ENCODE measurements at regions of chr1 and their contacts with region 1.

Region 1: DNA sequence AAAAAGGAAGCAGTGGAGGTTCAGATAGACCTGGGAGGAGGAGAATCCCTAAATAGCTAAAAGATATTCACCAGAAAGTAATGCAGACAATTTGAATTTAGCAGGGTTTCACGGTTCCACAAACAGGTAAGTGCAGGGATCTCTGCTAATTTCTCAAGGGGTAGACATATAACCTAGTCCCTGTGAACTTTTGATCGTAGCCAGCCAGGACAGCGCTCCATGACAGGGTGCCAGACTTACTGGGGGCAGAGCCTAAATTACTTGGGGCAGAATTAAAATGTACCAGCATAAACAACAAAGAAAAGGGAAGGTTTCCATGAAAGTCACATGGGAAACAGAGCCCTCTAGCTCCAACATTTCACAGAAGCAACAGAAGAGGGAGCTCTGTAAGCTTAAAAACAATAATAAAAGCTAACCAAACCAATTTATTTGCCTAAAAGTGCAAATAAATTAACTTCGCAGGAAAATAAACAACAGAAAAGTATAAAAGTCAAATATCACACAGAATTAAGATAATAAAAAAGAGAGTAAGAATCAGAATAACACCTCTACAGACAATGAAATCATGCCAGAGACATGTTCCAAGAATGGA is 198.3 kb downstream of the DUSP10 start:
- DNase-seq: no peak
- H3K4me3 ChIP-seq: no peak overlapping the region
- CTCF ChIP-seq: peak; percentile 24

Region 2: DNA sequence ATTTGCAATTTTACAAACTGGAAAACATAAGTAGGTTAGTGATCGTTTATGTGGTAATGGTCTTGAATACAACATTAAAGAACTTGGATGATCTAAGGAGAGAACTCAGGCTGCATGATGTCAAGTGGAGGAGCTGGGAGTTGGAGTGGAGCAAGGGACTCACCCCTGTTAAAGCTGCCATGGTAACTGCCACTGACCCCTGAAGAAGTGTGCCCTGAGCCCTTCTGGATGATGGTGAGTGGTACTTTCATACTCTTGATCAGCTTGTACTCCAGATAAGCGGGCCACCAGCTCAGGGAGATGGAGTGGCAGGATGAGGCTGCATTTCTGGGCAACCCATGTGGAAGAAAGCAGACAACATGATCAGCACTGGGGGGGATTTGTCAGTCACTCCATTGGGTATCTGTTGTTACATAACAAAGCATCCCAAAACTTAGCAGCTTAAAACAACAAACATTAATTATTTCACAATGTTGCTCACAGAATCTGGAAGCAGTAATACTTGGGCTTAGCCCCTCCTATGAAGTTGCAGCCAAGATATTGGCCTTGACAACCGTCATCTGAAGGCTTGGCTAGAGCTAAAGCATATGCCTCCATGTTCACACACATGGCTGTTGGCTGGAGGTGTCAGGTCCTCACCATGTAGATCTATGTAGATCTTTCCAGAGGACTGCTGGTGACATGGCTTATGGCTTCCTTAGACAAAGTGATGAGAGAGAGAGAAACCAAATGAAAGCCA is 15.6 kb before region 1 on chr1:
- CTCF ChIA-PET with region 1: interaction called, 14 read pairs
- POLR2A ChIA-PET with region 1: no interaction called
- DNase-seq: no peak
- H3K4me3 ChIP-seq: no peak overlapping the region
- CTCF ChIP-seq: no peak

Measured in AG04449 (cell line).